ENCODE measurements at regions of chr7 and their contacts with region 1.

Region 1: DNA sequence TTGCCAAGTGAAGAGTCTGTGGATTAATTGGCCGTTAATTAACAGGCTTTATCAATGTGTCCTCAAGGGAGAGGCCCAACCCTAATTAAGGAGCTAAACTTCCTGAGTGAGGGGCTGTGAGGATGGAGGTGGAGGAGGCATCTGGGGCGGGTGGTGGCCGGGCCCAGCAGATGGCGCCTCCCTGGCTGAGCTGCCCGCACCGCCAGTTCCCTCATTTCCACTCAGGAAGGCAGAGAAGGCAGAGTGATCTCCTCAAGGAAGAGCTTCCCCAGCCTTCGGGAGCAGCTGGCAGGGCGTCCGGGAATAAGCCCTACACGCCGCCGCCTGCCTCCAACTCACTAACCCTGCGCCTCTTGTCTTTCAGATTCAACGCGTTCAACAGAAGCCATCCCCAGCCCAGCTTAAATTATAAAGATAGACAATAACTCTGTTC is 112.2 kb downstream of the CYTH3 start:
- DNase-seq: peak; percentile 68

Region 2: DNA sequence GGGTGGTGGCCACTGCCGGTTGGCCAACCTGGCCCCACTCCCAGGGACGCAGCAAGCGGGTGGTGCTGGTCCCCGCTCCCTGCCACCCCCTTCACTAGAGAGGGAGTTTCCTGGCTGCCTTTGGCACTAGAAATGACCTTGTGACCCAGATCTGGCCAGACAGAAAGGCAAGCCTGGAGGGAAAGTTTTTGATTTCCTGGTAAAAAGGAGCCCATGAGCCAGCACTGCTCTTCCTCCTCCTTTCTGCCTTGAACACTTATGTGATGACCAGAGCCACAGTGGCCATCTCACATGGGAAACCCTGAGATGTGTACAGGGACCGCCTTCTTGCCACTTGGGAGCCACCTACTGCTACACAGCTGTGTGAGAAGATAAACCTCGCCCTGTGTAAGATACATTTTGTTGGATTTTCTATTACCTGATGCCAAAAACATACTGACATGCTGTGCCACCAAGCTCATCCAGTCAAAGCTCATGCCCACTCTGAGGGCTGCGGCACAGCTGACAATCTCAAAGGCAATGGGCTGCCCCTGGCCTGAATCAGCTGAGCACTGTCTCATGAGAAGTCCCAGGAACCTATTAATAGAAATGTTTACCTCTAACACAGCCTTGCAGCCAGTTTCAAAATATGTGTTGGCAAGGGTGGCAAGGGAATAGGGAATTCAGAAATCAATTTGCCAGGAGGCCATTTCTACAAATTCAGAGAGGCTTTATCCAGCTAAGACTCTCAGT is 18.3 kb after region 1 on chr7:
- CTCF ChIA-PET with region 1: no interaction called
- POLR2A ChIA-PET with region 1: no interaction called
- DNase-seq: no peak

Region 3: GRCh38 chr7:6323967-6324701 is 163.9 kb after region 1 on chr7:
- CTCF ChIA-PET with region 1: interaction called, 24 read pairs
- POLR2A ChIA-PET with region 1: no interaction called
- DNase-seq: no peak